MCF 10A (cell line): ENCODE measurements at regions of chr2 and their contacts with region 1.

Region 1: GRCh38 chr2:145752091-145752806 is 1232.3 kb upstream of the ZEB2 start:
- DNase-seq: peak; percentile 93
- H3K4me3 Mint-ChIP-seq: peak overlapping the region; percentile 20
- H3K27ac Mint-ChIP-seq: peak overlapping the region; percentile 75
- H3K4me1 Mint-ChIP-seq: peaks cover 30% of the 10 kb centered on the region
- H3K27me3 Mint-ChIP-seq: no peaks in the 10 kb centered on the region
- CTCF ChIP-seq: peak; percentile 55

Region 2: GRCh38 chr2:144703852-144704708 is 1048.2 kb before region 1 on chr2:
- CTCF ChIA-PET with region 1: interaction called, 4 read pairs
- POLR2A ChIA-PET with region 1: no interaction called
- intact Hi-C with region 1: loop called (anchors 5 kb)
- DNase-seq: peak; percentile 92
- H3K4me3 Mint-ChIP-seq: no peak overlapping the region
- H3K27ac Mint-ChIP-seq: peak overlapping the region; percentile 73
- H3K4me1 Mint-ChIP-seq: peaks cover 22% of the 10 kb centered on the region
- H3K27me3 Mint-ChIP-seq: no peaks in the 10 kb centered on the region
- CTCF ChIP-seq: no peak

Region 3: GRCh38 chr2:145484443-145485097 is 267.7 kb before region 1 on chr2:
- CTCF ChIA-PET with region 1: interaction called, 3 read pairs
- POLR2A ChIA-PET with region 1: no interaction called
- intact Hi-C with region 1: loop called (anchors 1 kb)
- DNase-seq: peak; percentile 72
- H3K4me3 Mint-ChIP-seq: no peak overlapping the region
- H3K27ac Mint-ChIP-seq: peak overlapping the region; percentile 91
- H3K4me1 Mint-ChIP-seq: peaks cover 20% of the 10 kb centered on the region
- H3K27me3 Mint-ChIP-seq: no peaks in the 10 kb centered on the region
- CTCF ChIP-seq: peak; percentile 41

Region 4: GRCh38 chr2:145692971-145693478 is 59.2 kb before region 1 on chr2:
- CTCF ChIA-PET with region 1: interaction called, 5 read pairs
- POLR2A ChIA-PET with region 1: interaction called, 5 read pairs
- intact Hi-C with region 1: loop called (anchors 1 kb)
- DNase-seq: peak; percentile 95
- H3K4me3 Mint-ChIP-seq: peak overlapping the region; percentile 14
- H3K27ac Mint-ChIP-seq: peak overlapping the region; percentile 94
- H3K4me1 Mint-ChIP-seq: peaks cover 25% of the 10 kb centered on the region
- H3K27me3 Mint-ChIP-seq: no peaks in the 10 kb centered on the region
- CTCF ChIP-seq: no peak

Region 5: DNA sequence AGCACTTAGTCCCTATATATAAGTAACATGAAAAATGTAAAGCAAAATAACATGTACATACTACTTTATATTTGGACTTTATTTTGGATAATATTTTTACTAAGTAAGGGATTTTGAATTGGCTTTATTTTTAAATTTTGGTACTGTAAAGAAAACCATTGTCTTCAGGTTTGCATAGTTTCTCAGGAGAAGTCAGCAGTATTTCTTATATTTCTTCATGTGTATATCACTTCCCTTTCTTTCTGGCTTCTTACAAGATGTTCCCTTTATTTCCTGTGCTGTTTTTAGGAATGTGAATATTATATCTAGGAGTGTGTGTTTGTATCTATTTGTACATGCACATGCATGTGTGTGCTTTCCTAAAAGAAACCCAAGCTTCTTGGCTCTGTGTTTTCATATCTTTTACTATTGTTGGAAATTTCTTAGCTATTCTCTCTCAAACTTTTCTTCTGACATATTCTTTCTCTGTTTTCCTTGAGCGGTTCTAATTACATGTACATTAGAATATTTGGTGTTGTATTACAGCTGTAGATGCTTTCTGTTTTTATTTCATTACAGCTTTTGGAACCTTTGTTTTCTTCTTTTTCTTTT is 542.9 kb after region 1 on chr2:
- CTCF ChIA-PET with region 1: no interaction called
- POLR2A ChIA-PET with region 1: no interaction called
- intact Hi-C with region 1: no loop called
- DNase-seq: peak; percentile 22
- H3K4me3 Mint-ChIP-seq: no peak overlapping the region
- H3K27ac Mint-ChIP-seq: no peak overlapping the region
- H3K4me1 Mint-ChIP-seq: no peaks in the 10 kb centered on the region
- H3K27me3 Mint-ChIP-seq: no peaks in the 10 kb centered on the region
- CTCF ChIP-seq: no peak

Region 6: DNA sequence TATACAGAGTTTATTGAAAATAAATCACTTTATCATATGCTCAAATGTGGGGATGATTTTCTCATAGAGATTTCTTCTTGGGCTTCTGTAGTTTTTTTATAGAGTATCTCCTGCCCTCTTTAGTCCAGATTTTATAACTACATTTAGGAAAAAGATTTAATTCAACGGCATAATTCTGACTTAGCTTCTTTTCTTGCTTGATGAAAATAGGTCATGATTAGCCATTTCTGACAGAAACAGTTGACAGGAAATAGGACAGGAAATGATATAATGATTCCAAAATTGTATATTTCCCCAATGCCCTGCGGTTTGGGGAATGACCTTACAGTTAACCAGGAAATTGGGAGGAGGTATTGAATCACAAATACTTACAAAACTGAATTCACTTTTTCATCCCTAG is 560.6 kb after region 1 on chr2:
- CTCF ChIA-PET with region 1: no interaction called
- POLR2A ChIA-PET with region 1: no interaction called
- intact Hi-C with region 1: loop called (anchors 5 kb)
- DNase-seq: peak; percentile 26
- H3K4me3 Mint-ChIP-seq: no peak overlapping the region
- H3K27ac Mint-ChIP-seq: peak overlapping the region; percentile 22
- H3K4me1 Mint-ChIP-seq: peaks cover 5% of the 10 kb centered on the region
- H3K27me3 Mint-ChIP-seq: no peaks in the 10 kb centered on the region
- CTCF ChIP-seq: peak; percentile 27